ENCODE measurements at regions of chr9 and their contacts with region 1.

Region 1: GRCh38 chr9:131253891-131254491 is 22.3 kb downstream of the FAM78A start:
- DNase-seq: no peak
- ATAC-seq: no peak
- H3K4me3 Mint-ChIP-seq: no peak overlapping the region
- H3K27ac Mint-ChIP-seq: peak overlapping the region; percentile 97
- H3K4me1 Mint-ChIP-seq: peaks cover 65% of the 10 kb centered on the region
- H3K27me3 Mint-ChIP-seq: no peaks in the 10 kb centered on the region

Region 2: GRCh38 chr9:130940693-130941576 is 313.1 kb before region 1 on chr9:
- CTCF ChIA-PET with region 1: no interaction called
- DNase-seq: peak; percentile 80
- ATAC-seq: peak; percentile 75
- H3K4me3 Mint-ChIP-seq: no peak overlapping the region
- H3K27ac Mint-ChIP-seq: no peak overlapping the region
- H3K4me1 Mint-ChIP-seq: peaks cover 10% of the 10 kb centered on the region
- H3K27me3 Mint-ChIP-seq: peaks cover 53% of the 10 kb centered on the region

Region 3: GRCh38 chr9:131277910-131278701 is 24.1 kb after region 1 on chr9:
- CTCF ChIA-PET with region 1: interaction called, 177 read pairs
- DNase-seq: peak; percentile 88
- ATAC-seq: peak; percentile 56
- H3K4me3 Mint-ChIP-seq: peak overlapping the region; percentile 78
- H3K27ac Mint-ChIP-seq: peak overlapping the region; percentile 97
- H3K4me1 Mint-ChIP-seq: peaks cover 23% of the 10 kb centered on the region
- H3K27me3 Mint-ChIP-seq: peaks cover 14% of the 10 kb centered on the region

Region 4: GRCh38 chr9:131320031-131320685 is 66.2 kb after region 1 on chr9:
- CTCF ChIA-PET with region 1: no interaction called
- DNase-seq: no peak
- ATAC-seq: no peak
- H3K4me3 Mint-ChIP-seq: no peak overlapping the region
- H3K27ac Mint-ChIP-seq: no peak overlapping the region
- H3K4me1 Mint-ChIP-seq: no peaks in the 10 kb centered on the region
- H3K27me3 Mint-ChIP-seq: no peaks in the 10 kb centered on the region